CD8-positive, alpha-beta T cell (primary cell): ENCODE measurements at regions of chr10 and their contacts with region 1.

Region 1: GRCh38 chr10:91251430-91252056 is 31.1 kb downstream of the PCGF5 start:
- DNase-seq: peak; percentile 18 to 79 (median 51)
- ATAC-seq: peak; percentile 89
- H3K4me3 ChIP-seq: no peak overlapping the region
- H3K4me3 Mint-ChIP-seq: no peak overlapping the region
- H3K27ac ChIP-seq: no peak overlapping the region
- H3K27ac Mint-ChIP-seq: no peak overlapping the region
- H3K4me1 ChIP-seq: peaks cover 15% of the 10 kb centered on the region
- H3K4me1 Mint-ChIP-seq: peaks cover 9% of the 10 kb centered on the region
- H3K27me3 ChIP-seq: no peaks in the 10 kb centered on the region
- H3K27me3 Mint-ChIP-seq: no peaks in the 10 kb centered on the region
- CTCF ChIP-seq: peak; percentile 99

Region 2: GRCh38 chr10:90751107-90751997 is 500.2 kb before region 1 on chr10:
- CTCF ChIA-PET with region 1: no interaction called
- POLR2A ChIA-PET with region 1: no interaction called
- intact Hi-C with region 1: loop called in 1 of 2 experiments (anchors 5 kb)
- DNase-seq: peak in 4 of 9 experiments; percentile 28 to 55 (median 38)
- ATAC-seq: peak; percentile 42
- H3K4me3 ChIP-seq: no peak overlapping the region
- H3K4me3 Mint-ChIP-seq: no peak overlapping the region
- H3K27ac ChIP-seq: no peak overlapping the region
- H3K27ac Mint-ChIP-seq: no peak overlapping the region
- H3K4me1 ChIP-seq: no peaks in the 10 kb centered on the region
- H3K4me1 Mint-ChIP-seq: no peaks in the 10 kb centered on the region
- H3K27me3 ChIP-seq: no peaks in the 10 kb centered on the region
- H3K27me3 Mint-ChIP-seq: peaks cover 27% of the 10 kb centered on the region
- CTCF ChIP-seq: peak; percentile 32

Region 3: DNA sequence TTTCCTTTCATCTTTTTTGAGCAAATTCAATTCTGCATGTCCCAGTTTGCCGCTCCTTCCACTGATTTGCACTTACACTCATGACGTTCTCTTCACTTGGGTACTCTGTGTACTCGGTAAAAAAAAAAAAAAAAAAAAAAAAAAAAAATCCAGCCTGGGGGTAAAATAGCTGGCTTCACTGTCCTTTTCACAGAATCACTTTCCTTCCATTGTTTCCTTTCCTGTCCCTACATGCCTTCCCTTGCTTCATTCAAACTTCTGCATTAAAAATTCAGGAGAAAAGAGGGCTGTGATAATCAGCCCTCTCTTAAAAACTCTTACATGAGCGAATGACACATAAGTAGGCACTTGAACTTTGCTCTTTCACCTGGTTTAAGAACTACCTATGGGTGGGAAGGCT is 339.4 kb before region 1 on chr10:
- CTCF ChIA-PET with region 1: interaction called, 23 read pairs
- POLR2A ChIA-PET with region 1: no interaction called
- intact Hi-C with region 1: loop called (anchors 1 kb)
- DNase-seq: no peak
- ATAC-seq: no peak
- H3K4me3 ChIP-seq: no peak overlapping the region
- H3K4me3 Mint-ChIP-seq: no peak overlapping the region
- H3K27ac ChIP-seq: no peak overlapping the region
- H3K27ac Mint-ChIP-seq: no peak overlapping the region
- H3K4me1 ChIP-seq: no peaks in the 10 kb centered on the region
- H3K4me1 Mint-ChIP-seq: peaks cover 3% of the 10 kb centered on the region
- H3K27me3 ChIP-seq: no peaks in the 10 kb centered on the region
- H3K27me3 Mint-ChIP-seq: no peaks in the 10 kb centered on the region
- CTCF ChIP-seq: no peak

Region 4: DNA sequence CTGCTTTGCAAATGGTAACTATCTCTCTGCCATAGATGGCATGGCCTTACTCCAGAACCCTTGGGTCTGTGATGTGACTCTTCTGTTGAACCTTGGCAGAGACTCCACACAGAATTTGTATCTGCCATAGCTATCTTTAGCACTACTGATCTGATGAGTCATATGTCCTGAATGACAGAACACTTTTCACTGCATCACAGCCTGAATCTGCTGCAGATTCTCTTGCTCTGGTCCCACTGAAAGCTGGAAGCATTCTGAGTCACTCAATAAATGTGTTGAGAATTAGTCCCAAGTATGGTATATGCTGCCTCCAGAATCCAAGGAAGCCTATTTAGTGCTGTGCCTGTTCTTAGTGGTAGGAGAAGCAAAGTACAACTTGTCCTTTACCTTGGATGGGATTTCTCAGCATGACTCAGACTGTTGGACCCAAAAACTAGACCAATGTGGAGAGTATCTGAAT is 291.2 kb before region 1 on chr10:
- CTCF ChIA-PET with region 1: no interaction called
- POLR2A ChIA-PET with region 1: no interaction called
- intact Hi-C with region 1: no loop called
- DNase-seq: no peak
- ATAC-seq: no peak
- H3K4me3 ChIP-seq: no peak overlapping the region
- H3K4me3 Mint-ChIP-seq: no peak overlapping the region
- H3K27ac ChIP-seq: no peak overlapping the region
- H3K27ac Mint-ChIP-seq: no peak overlapping the region
- H3K4me1 ChIP-seq: no peaks in the 10 kb centered on the region
- H3K4me1 Mint-ChIP-seq: no peaks in the 10 kb centered on the region
- H3K27me3 ChIP-seq: no peaks in the 10 kb centered on the region
- H3K27me3 Mint-ChIP-seq: no peaks in the 10 kb centered on the region
- CTCF ChIP-seq: no peak

Region 5: DNA sequence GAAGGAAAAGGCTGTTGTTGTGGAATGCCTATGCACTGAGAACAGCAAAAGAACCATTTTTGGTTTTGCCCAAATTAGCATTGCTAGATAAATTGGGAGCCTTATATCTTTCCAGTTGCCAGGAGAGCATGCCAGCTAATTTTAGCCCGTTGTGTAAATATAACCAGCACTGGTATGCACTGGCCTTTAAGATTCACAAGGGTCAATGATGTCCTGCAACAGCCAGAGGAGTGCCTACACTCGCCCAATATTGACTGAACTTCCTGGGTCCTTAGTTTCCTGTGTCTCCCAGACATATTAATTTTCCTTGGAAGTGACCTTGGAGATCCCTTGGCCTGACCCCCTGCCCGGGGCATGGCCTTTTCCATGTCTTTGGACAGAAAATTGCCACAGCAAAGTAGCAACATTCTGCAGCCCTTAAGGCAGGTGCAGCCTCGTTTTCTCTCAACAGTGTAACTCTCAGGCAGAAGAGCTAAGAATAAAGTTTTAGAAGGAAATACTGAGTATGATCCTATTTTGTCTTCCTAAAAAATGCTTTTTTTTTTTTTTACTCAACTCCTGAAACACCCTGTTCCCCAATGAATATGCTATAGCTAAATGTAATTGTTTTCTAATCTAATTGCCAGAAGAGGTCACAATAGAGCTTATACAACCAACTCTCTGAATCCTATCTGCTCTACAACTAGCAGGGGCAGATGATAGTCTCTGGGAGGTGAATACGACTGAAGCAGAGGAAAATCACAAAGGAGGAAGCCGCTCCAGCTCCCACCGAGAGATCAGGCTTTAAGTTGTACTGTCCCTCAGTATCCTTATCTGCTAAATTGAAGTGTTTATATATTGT is 163.0 kb before region 1 on chr10:
- CTCF ChIA-PET with region 1: interaction called, 83 read pairs
- POLR2A ChIA-PET with region 1: no interaction called
- intact Hi-C with region 1: loop called (anchors 1 kb)
- DNase-seq: peak in 2 of 9 experiments; percentile 30 to 49
- ATAC-seq: peak; percentile 46
- H3K4me3 ChIP-seq: no peak overlapping the region
- H3K4me3 Mint-ChIP-seq: no peak overlapping the region
- H3K27ac ChIP-seq: no peak overlapping the region
- H3K27ac Mint-ChIP-seq: no peak overlapping the region
- H3K4me1 ChIP-seq: no peaks in the 10 kb centered on the region
- H3K4me1 Mint-ChIP-seq: peaks cover 2% of the 10 kb centered on the region
- H3K27me3 ChIP-seq: no peaks in the 10 kb centered on the region
- H3K27me3 Mint-ChIP-seq: no peaks in the 10 kb centered on the region
- CTCF ChIP-seq: no peak

Region 6: GRCh38 chr10:91381257-91381891 is 129.8 kb after region 1 on chr10:
- CTCF ChIA-PET with region 1: no interaction called
- POLR2A ChIA-PET with region 1: no interaction called
- intact Hi-C with region 1: no loop called
- DNase-seq: no peak
- ATAC-seq: no peak
- H3K4me3 ChIP-seq: no peak overlapping the region
- H3K4me3 Mint-ChIP-seq: no peak overlapping the region
- H3K27ac ChIP-seq: no peak overlapping the region
- H3K27ac Mint-ChIP-seq: no peak overlapping the region
- H3K4me1 ChIP-seq: peaks cover 15% of the 10 kb centered on the region
- H3K4me1 Mint-ChIP-seq: peaks cover 25% of the 10 kb centered on the region
- H3K27me3 ChIP-seq: no peaks in the 10 kb centered on the region
- H3K27me3 Mint-ChIP-seq: peaks cover 23% of the 10 kb centered on the region
- CTCF ChIP-seq: no peak

Region 7: GRCh38 chr10:91444211-91445182 is 193.0 kb after region 1 on chr10:
- CTCF ChIA-PET with region 1: no interaction called
- POLR2A ChIA-PET with region 1: no interaction called
- intact Hi-C with region 1: no loop called
- DNase-seq: no peak
- ATAC-seq: no peak
- H3K4me3 ChIP-seq: no peak overlapping the region
- H3K4me3 Mint-ChIP-seq: no peak overlapping the region
- H3K27ac ChIP-seq: no peak overlapping the region
- H3K27ac Mint-ChIP-seq: no peak overlapping the region
- H3K4me1 ChIP-seq: no peaks in the 10 kb centered on the region
- H3K4me1 Mint-ChIP-seq: no peaks in the 10 kb centered on the region
- H3K27me3 ChIP-seq: no peaks in the 10 kb centered on the region
- H3K27me3 Mint-ChIP-seq: no peaks in the 10 kb centered on the region
- CTCF ChIP-seq: no peak